Right ventricle myocardium inferior (tissue), 1 donor: ENCODE measurements at regions of chr11 and their contacts with region 1.

Region 1: GRCh38 chr11:14751975-14752407 is 108.4 kb downstream of the PDE3B start:
- DNase-seq: no peak
- ATAC-seq: no peak

Region 2: DNA sequence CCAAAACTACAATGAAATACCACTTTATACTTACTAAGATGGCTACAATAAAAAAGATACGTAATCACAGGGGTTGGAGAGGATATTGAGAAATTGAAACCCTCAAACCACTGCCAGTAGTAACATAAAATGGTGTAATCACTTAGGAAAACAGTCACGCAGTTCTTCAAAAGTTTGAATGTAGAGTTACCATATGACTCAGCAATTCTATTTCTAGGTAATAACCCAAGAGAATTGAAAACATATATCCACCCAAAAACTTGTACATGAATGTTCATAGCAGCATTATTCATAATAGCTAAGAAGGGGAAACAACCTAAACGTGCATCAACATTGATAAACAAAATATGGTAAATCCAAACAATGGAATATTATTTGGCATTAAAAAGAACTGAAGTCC is 207.4 kb before region 1 on chr11:
- intact Hi-C with region 1: loop called (anchors 10 kb)
- DNase-seq: no peak
- ATAC-seq: no peak